B cell (primary cell): ENCODE measurements at regions of chr7 and their contacts with region 1.

Region 1: DNA sequence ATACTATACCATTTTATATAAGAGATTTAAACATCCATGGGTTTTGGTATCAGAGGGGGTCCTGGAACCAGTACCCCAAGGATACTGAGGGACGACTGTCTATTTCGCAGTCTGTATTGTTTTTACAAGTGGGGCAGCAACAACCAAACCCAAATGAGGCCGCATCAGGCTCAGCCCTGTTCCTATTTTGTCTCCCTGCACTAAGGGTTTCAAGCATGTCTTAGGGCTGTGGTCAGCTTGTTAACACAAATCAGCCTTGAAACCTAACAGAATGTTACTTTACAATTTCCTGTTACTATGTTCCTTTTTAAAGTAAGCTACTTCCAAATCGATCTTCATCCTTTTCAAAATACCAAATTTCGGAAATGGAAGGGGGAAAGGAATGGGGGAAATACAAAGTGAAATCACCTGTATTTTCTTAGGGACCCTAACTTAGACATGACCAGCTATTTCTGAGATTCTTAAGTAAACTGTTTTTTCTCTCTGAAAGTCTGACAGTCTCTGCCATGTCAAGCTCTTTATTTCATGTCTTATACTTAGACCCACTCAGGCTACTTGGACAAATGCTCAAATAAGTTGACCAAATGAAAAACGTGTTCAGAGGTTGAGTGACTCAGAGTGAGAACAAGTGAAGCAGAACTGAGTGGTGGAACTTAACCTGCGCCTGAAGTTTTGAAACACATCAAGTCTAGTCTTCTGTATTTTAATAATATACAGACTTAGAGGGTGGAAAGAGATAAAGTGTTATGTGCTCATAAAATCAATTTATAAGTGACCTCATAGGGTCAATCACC is 75.8 kb downstream of the C1GALT1 start:
- DNase-seq: peak; percentile 61
- ATAC-seq: peak; percentile 74
- H3K4me3 ChIP-seq: peak overlapping the region; percentile 12 to 63 (median 51)
- H3K4me3 Mint-ChIP-seq: peak overlapping the region; percentile 71
- H3K27ac ChIP-seq: peak overlapping the region; percentile 80 to 81
- H3K27ac Mint-ChIP-seq: peak overlapping the region; percentile 89
- H3K4me1 ChIP-seq: peaks cover 52 to 56% of the 10 kb centered on the region in 2 donors
- H3K4me1 Mint-ChIP-seq: peaks cover 61% of the 10 kb centered on the region
- H3K27me3 ChIP-seq: no peaks in the 10 kb centered on the region
- H3K27me3 Mint-ChIP-seq: no peaks in the 10 kb centered on the region
- CTCF ChIP-seq: no peak

Region 2: DNA sequence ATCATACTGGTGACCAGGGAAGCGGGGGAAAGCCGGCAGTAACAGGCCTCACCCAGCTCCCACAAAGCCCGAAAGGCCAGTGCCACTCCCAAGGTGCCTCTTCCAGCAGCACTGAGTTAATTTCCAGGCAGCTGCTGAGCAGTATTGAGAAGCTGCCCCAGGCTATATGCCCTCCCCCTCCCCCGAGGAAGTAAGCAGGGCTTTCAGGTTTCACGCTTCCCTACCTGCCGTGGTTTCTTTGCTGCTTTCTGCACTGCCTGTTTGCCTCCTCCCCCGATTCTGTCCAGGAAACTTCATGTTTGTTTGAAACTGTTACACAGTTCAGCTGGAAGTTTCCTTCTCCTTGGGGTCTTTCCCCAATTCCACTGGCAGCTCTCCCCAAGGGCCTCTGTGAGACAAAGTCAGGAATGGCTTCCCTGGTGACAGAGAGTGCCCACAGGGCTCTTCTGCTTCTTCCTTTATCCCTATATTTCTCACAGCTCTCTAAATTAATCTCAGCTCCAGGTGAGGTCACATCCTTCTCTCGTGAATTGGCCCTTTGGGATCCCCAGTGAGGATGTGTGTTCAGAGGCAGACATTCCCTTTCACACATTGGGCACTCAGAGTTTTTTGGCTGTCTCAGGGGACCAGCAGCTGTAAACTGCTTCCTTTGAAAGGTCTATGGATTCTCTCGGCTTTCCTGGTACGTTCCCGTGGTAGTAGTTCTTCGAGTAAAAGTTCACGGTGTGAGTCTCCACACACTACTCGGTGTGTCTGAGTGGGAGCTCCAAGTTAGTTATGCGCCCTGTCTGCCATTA is 56.3 kb before region 1 on chr7:
- CTCF ChIA-PET with region 1: no interaction called
- POLR2A ChIA-PET with region 1: interaction called, 4 read pairs
- intact Hi-C with region 1: loop called (anchors 1 kb)
- DNase-seq: peak; percentile 76
- ATAC-seq: peak; percentile 99
- H3K4me3 ChIP-seq: peak overlapping the region in 3 of 5 experiments; percentile 23 to 46 (median 33)
- H3K4me3 Mint-ChIP-seq: peak overlapping the region; percentile 64
- H3K27ac ChIP-seq: peak overlapping the region; percentile 52 to 75
- H3K27ac Mint-ChIP-seq: peak overlapping the region; percentile 79
- H3K4me1 ChIP-seq: peaks cover 26 to 46% of the 10 kb centered on the region in 2 donors
- H3K4me1 Mint-ChIP-seq: peaks cover 84% of the 10 kb centered on the region
- H3K27me3 ChIP-seq: no peaks in the 10 kb centered on the region
- H3K27me3 Mint-ChIP-seq: no peaks in the 10 kb centered on the region
- CTCF ChIP-seq: no peak

Region 3: GRCh38 chr7:7321720-7322128 is 63.6 kb after region 1 on chr7:
- CTCF ChIA-PET with region 1: no interaction called
- POLR2A ChIA-PET with region 1: interaction called, 7 read pairs
- intact Hi-C with region 1: loop called (anchors 5 kb)
- DNase-seq: peak; percentile 59
- ATAC-seq: peak; percentile 92
- H3K4me3 ChIP-seq: no peak overlapping the region
- H3K4me3 Mint-ChIP-seq: no peak overlapping the region
- H3K27ac ChIP-seq: no peak overlapping the region
- H3K27ac Mint-ChIP-seq: peak overlapping the region; percentile 10
- H3K4me1 ChIP-seq: peaks cover 24 to 27% of the 10 kb centered on the region in 2 donors
- H3K4me1 Mint-ChIP-seq: peaks cover 30% of the 10 kb centered on the region
- H3K27me3 ChIP-seq: no peaks in the 10 kb centered on the region
- H3K27me3 Mint-ChIP-seq: no peaks in the 10 kb centered on the region
- CTCF ChIP-seq: no peak

Region 4: DNA sequence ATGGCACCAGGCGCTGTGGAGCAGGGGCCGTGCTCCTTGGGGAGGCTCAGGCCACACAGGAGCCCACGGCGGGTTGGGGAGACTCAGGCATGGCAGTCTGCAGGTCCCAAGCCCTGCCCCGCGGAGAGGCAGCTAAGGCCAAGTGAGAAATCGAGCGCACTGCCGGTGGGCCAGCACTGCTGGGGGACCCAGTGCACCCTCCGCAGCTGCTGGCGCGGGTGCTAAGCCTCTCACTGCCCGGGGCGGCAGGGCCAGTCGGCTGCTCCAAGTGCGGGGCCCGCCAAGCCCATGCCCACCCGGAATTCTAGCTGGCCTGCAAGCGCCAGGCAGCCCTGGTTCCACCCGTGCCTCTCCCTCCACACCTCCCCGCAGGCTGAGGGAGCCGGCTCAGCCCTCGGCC is 220.5 kb after region 1 on chr7:
- CTCF ChIA-PET with region 1: no interaction called
- POLR2A ChIA-PET with region 1: no interaction called
- intact Hi-C with region 1: no loop called
- DNase-seq: no peak
- ATAC-seq: no peak
- H3K4me3 ChIP-seq: no peak overlapping the region
- H3K4me3 Mint-ChIP-seq: no peak overlapping the region
- H3K27ac ChIP-seq: no peak overlapping the region
- H3K27ac Mint-ChIP-seq: no peak overlapping the region
- H3K4me1 ChIP-seq: no peaks in the 10 kb centered on the region
- H3K4me1 Mint-ChIP-seq: no peaks in the 10 kb centered on the region
- H3K27me3 ChIP-seq: no peaks in the 10 kb centered on the region
- H3K27me3 Mint-ChIP-seq: no peaks in the 10 kb centered on the region
- CTCF ChIP-seq: no peak

Region 5: GRCh38 chr7:7566651-7567611 is 308.8 kb after region 1 on chr7 and contains the start of gene MIOS:
- CTCF ChIA-PET with region 1: no interaction called
- POLR2A ChIA-PET with region 1: no interaction called
- intact Hi-C with region 1: loop called (anchors 1 kb)
- DNase-seq: peak; percentile 92
- ATAC-seq: peak; percentile 85
- H3K4me3 ChIP-seq: peak within 1 kb of the TSS; percentile 65 to 94 (median 81)
- H3K4me3 Mint-ChIP-seq: peak within 1 kb of the TSS; percentile 83
- H3K27ac ChIP-seq: peak within 1 kb of the TSS; percentile 93 to 99
- H3K27ac Mint-ChIP-seq: peak within 1 kb of the TSS; percentile 90
- H3K4me1 ChIP-seq: peaks cover 41 to 44% of the 10 kb centered on the region in 2 donors
- H3K4me1 Mint-ChIP-seq: peaks cover 35% of the 10 kb centered on the region
- H3K27me3 ChIP-seq: no peaks in the 10 kb centered on the region
- H3K27me3 Mint-ChIP-seq: no peaks in the 10 kb centered on the region
- CTCF ChIP-seq: no peak
- total RNA-seq, gene MIOS: 48.7 and 50.1 TPM in 2 replicates